ENCODE measurements at regions of chr6 and their contacts with region 1.

Region 1: DNA sequence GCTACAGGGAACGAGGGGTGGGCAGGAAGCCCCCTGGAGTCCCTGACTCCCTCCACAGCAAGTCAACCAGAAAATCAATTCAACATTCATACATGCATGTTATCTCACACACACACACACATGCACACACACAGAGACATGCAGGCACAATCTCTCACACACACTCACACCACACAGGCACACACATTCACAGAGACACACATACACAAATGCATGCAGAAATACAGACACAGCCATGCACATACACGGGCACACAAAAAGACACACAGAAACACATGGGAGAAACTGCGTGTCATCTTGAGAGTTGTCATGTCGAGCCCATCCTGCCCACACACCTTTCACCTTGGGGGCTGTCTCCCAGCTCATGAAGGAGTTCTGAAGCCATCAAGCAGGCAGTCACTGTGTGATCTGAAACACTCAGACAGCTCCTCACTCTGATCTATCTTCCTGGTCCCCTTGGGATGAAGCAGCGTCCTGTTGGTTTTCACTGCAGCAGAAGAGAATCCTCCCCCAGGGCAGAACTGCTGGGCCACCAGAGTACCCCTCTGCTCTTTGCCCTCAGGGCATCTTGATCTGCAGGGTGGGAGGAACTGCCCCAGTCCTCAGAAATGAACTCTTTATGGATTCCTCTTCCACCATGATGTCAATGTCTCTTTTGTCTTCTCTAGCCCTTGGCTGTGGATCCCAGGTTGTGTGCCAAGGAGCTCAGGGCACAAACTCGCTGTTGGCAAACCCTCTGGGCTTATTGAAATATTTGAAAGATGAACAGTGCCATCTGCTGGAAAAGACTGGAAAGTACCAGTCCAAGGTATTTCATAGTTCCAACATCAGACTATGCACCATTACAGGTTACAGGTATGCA is 8.8 kb downstream of the RAET1L start:
- DNase-seq: no peak
- ATAC-seq: peak; percentile 78 to 86
- H3K4me3 ChIP-seq: no peak overlapping the region
- H3K27ac ChIP-seq: no peak overlapping the region
- H3K4me1 ChIP-seq: no peaks in the 10 kb centered on the region
- H3K27me3 ChIP-seq: peaks cover 63% of the 10 kb centered on the region
- CTCF ChIP-seq: peak; percentile 76

Region 2: DNA sequence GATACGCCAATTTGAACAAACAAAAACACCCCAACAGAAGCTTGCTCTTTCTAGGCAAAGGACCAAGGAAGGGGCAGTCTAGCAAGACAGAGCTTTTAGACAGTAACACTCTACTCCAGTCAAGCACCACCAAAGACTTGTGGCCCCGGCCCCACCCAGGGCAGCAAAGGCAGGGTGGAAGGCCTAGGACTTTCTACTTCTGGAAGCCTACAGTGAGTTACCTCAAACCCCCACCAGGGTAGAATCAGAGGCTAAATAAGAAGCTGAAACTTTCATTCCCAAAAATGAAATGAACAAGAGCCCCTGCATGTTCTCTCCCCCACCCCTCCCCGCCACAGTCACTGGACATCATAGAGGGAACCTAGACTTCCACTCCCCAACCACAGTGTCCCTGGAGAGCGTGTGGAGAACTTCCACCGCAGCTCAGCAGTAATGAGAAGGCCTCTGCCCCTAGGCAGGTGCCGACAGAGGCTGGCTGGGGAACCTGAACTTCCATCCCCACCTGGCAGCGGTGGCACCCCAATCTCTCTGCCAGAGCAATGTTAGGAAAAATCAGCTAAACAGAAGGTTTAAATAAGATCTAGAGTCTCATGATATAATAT is 408.1 kb before region 1 on chr6:
- intact Hi-C with region 1: no loop called
- DNase-seq: no peak
- ATAC-seq: no peak
- H3K4me3 ChIP-seq: no peak overlapping the region
- H3K27ac ChIP-seq: no peak overlapping the region
- H3K4me1 ChIP-seq: no peaks in the 10 kb centered on the region
- H3K27me3 ChIP-seq: no peaks in the 10 kb centered on the region
- CTCF ChIP-seq: no peak

Region 3: GRCh38 chr6:149840345-149841075 is 176.0 kb before region 1 on chr6:
- intact Hi-C with region 1: no loop called
- DNase-seq: peak; percentile 73
- ATAC-seq: peak; percentile 84 to 92
- H3K4me3 ChIP-seq: no peak overlapping the region
- H3K27ac ChIP-seq: no peak overlapping the region
- H3K4me1 ChIP-seq: peaks cover 10% of the 10 kb centered on the region
- H3K27me3 ChIP-seq: no peaks in the 10 kb centered on the region
- CTCF ChIP-seq: peak; percentile 66

Region 4: DNA sequence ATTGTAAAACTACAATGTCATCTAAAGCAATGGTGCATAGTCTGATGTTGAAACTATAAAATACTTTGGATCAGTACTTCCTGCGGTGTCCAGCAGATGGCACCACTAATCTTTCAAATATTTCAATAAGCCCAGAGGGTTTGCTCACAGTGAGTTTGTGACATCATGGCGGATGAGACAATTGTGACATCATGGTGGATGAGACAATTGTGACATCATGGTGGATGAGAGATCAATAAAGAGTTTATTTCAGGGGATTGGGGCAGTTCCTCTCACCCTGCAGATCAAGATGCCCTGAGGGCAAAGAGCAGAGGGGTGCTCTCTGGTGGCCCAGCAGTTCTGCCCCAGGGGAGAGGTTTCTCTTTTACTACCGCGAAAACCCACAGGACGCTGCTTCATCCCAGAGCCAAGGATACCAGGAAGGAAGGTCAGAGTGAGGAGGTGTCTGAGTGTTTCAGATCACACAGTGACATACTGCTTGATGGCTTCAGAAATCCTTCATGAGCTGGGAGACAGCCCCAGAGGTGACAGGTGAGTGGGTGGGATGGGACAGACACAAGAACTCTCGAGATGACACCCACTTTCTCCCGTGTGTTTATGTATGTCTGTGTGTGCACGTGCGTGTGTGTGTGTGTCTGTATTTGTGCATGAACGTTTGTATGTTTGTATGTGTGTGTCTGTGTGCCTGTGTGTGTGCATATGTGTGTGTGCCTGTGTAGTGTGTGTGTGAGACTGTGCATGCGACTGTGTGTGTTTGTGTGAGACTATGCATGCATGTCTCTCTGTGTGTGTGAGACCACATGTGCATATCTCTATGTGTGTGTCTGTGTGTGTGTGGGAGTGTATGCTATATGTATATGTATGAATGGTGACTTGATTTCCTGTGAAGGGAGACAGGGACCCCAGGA is 82.1 kb before region 1 on chr6:
- intact Hi-C with region 1: loop called (anchors 5 kb)
- DNase-seq: no peak
- ATAC-seq: peak; percentile 78 to 79
- H3K4me3 ChIP-seq: no peak overlapping the region
- H3K27ac ChIP-seq: no peak overlapping the region
- H3K4me1 ChIP-seq: peaks cover 14% of the 10 kb centered on the region
- H3K27me3 ChIP-seq: peaks cover 85% of the 10 kb centered on the region
- CTCF ChIP-seq: peak; percentile 89

Region 5: DNA sequence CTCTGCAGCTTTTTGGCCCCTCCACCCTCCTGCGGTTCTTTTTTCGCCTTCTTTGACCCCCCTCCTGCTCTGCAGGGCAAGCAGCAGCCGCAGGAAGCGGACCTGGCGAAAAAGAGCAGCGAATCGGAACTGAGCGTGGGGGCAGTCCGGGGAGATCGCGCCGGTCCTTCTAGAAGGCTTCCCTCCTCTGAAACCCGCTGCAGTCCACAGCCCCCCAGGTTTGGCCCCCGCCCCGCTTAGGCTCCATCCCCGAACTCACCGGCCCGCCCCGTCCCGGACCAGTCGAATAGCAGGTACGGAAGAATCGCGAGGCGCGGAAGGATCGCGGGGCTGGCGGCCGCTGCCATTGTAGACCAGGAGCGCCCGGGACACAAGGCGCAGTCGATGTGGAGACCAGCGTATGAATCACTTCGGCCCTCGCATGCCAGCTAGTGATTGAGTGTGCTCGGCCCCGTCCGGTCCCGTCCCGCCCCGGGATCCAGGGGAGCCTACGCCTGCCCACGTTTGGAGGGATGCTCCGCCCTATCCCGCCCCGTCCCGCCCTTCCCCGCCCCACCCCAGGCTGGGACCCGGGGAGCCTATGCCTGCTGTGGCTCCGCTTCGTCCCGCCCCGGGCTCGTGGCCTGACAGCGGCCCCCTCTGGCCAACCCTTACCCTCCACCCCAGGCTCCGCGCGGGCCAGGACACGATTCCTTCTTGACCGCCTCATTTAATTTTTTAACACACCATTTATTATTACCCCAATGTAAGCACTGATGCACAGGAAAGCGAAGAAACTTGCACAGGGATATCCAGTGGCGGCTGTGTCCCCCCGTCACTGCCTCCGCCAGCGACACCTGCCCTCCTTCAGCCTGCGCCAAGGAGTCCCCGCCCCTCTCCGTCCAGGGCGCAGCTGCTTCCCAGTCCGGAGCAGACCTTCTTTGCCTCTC is 52.4 kb after region 1 on chr6 and contains the start of gene ULBP3:
- intact Hi-C with region 1: no loop called
- DNase-seq: peak; percentile 93
- ATAC-seq: peak; percentile 93 to 94
- H3K4me3 ChIP-seq: peak within 1 kb of the TSS; percentile 76
- H3K27ac ChIP-seq: peak within 1 kb of the TSS; percentile 78
- H3K4me1 ChIP-seq: peaks cover 16% of the 10 kb centered on the region
- H3K27me3 ChIP-seq: no peaks in the 10 kb centered on the region
- CTCF ChIP-seq: peak; percentile 48
- total RNA-seq, gene ULBP3: 2.4 TPM